Naive thymus-derived CD4-positive, alpha-beta T cell (primary cell): ENCODE measurements at regions of chr21 and their contacts with region 1.

Region 1: GRCh38 chr21:36104317-36105300 is 30.3 kb upstream of the CBR3 start:
- DNase-seq: peak; percentile 31 to 64 (median 44)
- ATAC-seq: peak; percentile 73
- H3K4me3 ChIP-seq: no peak overlapping the region
- H3K4me3 Mint-ChIP-seq: peak overlapping the region in 9 of 10 donors; percentile 0 to 72 (median 45)
- H3K27ac ChIP-seq: no peak overlapping the region
- H3K27ac Mint-ChIP-seq: peak overlapping the region in 3 of 9 donors; percentile 21 to 38 (median 36)
- H3K4me1 ChIP-seq: no peaks in the 10 kb centered on the region
- H3K4me1 Mint-ChIP-seq: peaks cover 3 to 12% (median 9%) of the 10 kb centered on the region in 7 donors
- H3K27me3 ChIP-seq: peaks cover 0 to 3% of the 10 kb centered on the region in 2 donors
- H3K27me3 Mint-ChIP-seq: peaks cover 28 to 58% (median 33%) of the 10 kb centered on the region in 5 donors

Region 2: DNA sequence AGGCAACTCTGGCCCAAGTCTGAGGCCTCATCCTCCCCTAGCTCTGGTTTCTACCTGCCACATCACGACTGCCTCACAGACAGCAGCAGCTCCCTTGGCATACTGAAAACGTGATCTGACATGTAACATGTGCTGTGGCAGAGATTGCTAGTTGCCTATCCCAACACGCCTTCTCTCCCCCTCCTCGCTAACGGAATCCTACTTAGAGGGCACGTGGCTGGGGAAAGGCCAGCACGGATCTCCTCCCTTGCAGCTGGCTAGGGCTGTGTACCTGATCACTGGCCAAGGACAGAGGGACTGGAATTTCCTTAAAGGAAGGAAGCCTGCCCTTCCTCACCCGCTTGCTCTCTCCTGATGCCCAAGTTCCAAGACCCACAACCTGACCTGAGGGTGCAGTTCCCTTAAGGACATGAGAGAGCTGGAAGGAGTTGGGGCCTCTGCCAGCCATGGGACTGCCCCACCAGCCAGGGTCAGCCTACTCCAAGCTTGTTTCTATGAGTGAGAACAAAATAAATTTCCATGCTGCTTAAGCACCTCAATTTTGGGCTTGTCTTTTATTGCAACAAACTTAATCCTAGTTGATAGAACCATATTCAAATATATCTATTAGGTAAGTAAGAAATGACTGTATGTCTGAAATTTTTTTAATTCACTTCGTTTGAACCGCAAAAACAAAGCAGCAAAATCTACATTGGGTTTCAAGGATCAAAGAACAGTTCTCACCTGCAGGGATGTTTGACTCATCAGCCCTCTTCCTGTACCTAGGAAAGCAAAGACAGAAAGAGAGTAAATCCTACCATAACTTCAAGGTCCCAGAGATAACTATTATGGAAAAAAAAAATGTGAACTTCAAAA is 51.5 kb before region 1 on chr21:
- CTCF ChIA-PET with region 1: interaction called, 4 read pairs
- POLR2A ChIA-PET with region 1: no interaction called
- intact Hi-C with region 1: loop called in 1 of 2 experiments (anchors 2 kb)
- DNase-seq: no peak
- ATAC-seq: no peak
- H3K4me3 ChIP-seq: no peak overlapping the region
- H3K4me3 Mint-ChIP-seq: no peak overlapping the region
- H3K27ac ChIP-seq: no peak overlapping the region
- H3K27ac Mint-ChIP-seq: peak overlapping the region in 3 of 9 donors; percentile 13 to 74 (median 24)
- H3K4me1 ChIP-seq: no peaks in the 10 kb centered on the region
- H3K4me1 Mint-ChIP-seq: peaks cover 15 to 39% (median 22%) of the 10 kb centered on the region in 7 donors
- H3K27me3 ChIP-seq: no peaks in the 10 kb centered on the region
- H3K27me3 Mint-ChIP-seq: no peaks in the 10 kb centered on the region

Region 3: GRCh38 chr21:36141513-36141925 is 36.9 kb after region 1 on chr21:
- CTCF ChIA-PET with region 1: no interaction called
- POLR2A ChIA-PET with region 1: no interaction called
- intact Hi-C with region 1: no loop called
- DNase-seq: peak; percentile 50 to 92 (median 84)
- ATAC-seq: peak; percentile 99
- H3K4me3 ChIP-seq: no peak overlapping the region
- H3K4me3 Mint-ChIP-seq: peak overlapping the region in 5 of 10 donors; percentile 1 to 15 (median 3)
- H3K27ac ChIP-seq: peak overlapping the region; percentile 74
- H3K27ac Mint-ChIP-seq: peak overlapping the region; percentile 16 to 92 (median 83)
- H3K4me1 ChIP-seq: peaks cover 18 to 19% of the 10 kb centered on the region in 2 donors
- H3K4me1 Mint-ChIP-seq: peaks cover 11 to 42% (median 39%) of the 10 kb centered on the region in 7 donors
- H3K27me3 ChIP-seq: no peaks in the 10 kb centered on the region
- H3K27me3 Mint-ChIP-seq: no peaks in the 10 kb centered on the region